ENCODE measurements at regions of chr12 and their contacts with region 1.

Region 1: DNA sequence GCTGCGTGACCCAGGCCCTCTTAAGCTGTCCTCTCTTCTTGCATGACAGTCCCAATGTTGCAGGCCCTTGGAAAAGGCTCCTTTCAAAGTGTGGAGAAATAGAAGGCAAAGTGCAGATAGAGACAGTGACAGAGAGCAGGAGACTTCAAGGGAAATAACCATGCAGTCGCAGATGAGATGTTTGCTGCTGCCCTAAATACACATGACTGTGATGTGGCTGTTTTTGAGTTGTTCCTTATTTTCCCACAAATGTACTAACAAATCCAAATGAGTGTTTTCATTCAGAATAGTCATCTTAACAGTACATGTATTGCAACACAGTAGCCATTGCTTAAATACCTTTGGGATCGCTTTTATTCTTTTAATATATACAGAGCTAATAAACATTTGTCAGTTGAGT is 101.6 kb downstream of the SLC15A5 start:
- DNase-seq: no peak
- H3K4me3 ChIP-seq: no peak overlapping the region
- H3K27ac ChIP-seq: no peak overlapping the region
- H3K4me1 ChIP-seq: no peaks in the 10 kb centered on the region
- H3K27me3 ChIP-seq: no peaks in the 10 kb centered on the region
- CTCF ChIP-seq: no peak
- POLR2A ChIP-seq: no peak

Region 2: GRCh38 chr12:16359512-16360491 is 184.0 kb after region 1 on chr12:
- intact Hi-C with region 1: loop called (anchors 10 kb)
- DNase-seq: peak; percentile 25
- H3K4me3 ChIP-seq: no peak overlapping the region
- H3K27ac ChIP-seq: no peak overlapping the region
- H3K4me1 ChIP-seq: no peaks in the 10 kb centered on the region
- H3K27me3 ChIP-seq: no peaks in the 10 kb centered on the region
- CTCF ChIP-seq: peak in 3 of 4 experiments; percentile 56 to 71 (median 63)
- POLR2A ChIP-seq: no peak